ENCODE measurements at regions of chr6 and their contacts with region 1.

Region 1: DNA sequence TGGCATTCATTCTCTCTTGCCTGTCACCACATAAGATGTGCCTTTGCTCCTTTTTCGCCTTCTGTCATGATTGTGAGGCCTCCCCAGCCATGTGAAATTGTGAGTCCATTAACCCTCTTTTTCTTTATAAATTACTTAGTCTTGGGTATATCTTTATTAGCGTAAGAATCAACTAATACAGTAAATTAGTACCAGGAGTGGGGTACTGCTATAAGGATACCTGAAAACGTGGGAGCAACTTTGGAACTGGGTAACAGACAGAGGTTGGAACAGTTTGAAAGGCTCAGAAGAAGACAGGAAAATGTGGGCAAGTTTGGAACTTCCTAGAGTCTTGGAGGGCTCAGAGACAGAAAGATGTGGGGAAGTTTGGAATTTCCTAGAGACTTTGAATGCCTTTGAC is 46.6 kb downstream of the RNF182 start:
- DNase-seq: no peak
- H3K4me3 ChIP-seq: no peak overlapping the region
- H3K27ac ChIP-seq: no peak overlapping the region
- H3K4me1 ChIP-seq: no peaks in the 10 kb centered on the region
- H3K27me3 ChIP-seq: no peaks in the 10 kb centered on the region
- CTCF ChIP-seq: no peak
- POLR2A ChIP-seq: no peak

Region 2: GRCh38 chr6:13935190-13935880 is 36.0 kb before region 1 on chr6:
- intact Hi-C with region 1: no loop called
- DNase-seq: no peak
- H3K4me3 ChIP-seq: no peak overlapping the region
- H3K27ac ChIP-seq: no peak overlapping the region
- H3K4me1 ChIP-seq: no peaks in the 10 kb centered on the region
- H3K27me3 ChIP-seq: no peaks in the 10 kb centered on the region
- CTCF ChIP-seq: no peak
- POLR2A ChIP-seq: no peak

Region 3: DNA sequence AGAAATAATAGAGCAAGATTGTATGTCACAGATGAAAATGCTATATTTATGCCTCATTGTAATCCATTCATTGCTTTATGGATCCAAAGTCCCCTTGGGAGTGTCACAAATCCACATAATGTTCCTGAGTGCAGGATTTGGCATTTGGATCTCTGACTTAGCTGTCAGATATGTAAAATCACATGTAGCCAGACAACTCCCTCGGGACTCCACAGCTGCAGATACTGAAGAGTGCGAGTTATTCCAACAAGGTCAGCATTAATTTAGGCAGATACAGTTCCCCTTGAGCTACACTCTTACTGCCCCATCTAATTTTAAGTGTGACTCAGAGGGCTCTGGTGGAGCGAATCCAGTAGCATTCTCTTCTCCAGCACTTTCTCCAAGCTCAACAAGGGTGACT is 579.5 kb after region 1 on chr6:
- intact Hi-C with region 1: loop called (anchors 5 kb)
- DNase-seq: no peak
- H3K4me3 ChIP-seq: no peak overlapping the region
- H3K27ac ChIP-seq: no peak overlapping the region
- H3K4me1 ChIP-seq: no peaks in the 10 kb centered on the region
- H3K27me3 ChIP-seq: no peaks in the 10 kb centered on the region
- CTCF ChIP-seq: no peak
- POLR2A ChIP-seq: no peak

Measured in breast epithelium (tissue), 4 donors.